ENCODE measurements at regions of chr4 and their contacts with region 1.

Region 1: GRCh38 chr4:159925770-159926169 is 822.9 kb downstream of the RAPGEF2 start:
- DNase-seq: no peak
- ATAC-seq: no peak
- H3K4me3 ChIP-seq: no peak overlapping the region
- H3K27ac ChIP-seq: no peak overlapping the region
- H3K4me1 ChIP-seq: no peaks in the 10 kb centered on the region
- H3K27me3 ChIP-seq: no peaks in the 10 kb centered on the region
- CTCF ChIP-seq: no peak

Region 2: DNA sequence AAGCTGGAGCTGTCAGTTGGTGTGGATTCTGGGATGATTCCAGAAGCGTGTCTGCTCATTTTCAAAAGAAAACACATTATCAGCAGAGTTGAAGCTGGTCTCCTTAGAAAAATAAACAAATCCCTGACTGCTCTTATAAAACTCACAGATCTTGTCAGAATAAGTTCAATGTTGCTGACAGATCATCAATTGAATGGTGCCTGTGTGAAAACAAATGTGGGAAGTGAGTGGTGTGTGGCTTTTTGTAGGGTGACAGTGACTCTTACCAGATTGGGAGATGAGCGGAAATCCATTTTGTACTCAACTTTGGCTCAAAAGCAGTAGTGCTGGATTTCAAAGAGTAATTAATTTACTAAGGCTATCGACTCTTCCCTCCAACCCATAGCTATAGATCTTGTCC is 15.0 kb before region 1 on chr4:
- intact Hi-C with region 1: loop called in 1 of 10 experiments (anchors 1 kb)
- DNase-seq: no peak
- ATAC-seq: no peak
- H3K4me3 ChIP-seq: no peak overlapping the region
- H3K27ac ChIP-seq: no peak overlapping the region
- H3K4me1 ChIP-seq: no peaks in the 10 kb centered on the region
- H3K27me3 ChIP-seq: no peaks in the 10 kb centered on the region
- CTCF ChIP-seq: no peak

Region 3: GRCh38 chr4:160580581-160580980 is 654.8 kb after region 1 on chr4:
- intact Hi-C with region 1: no loop called
- DNase-seq: no peak
- ATAC-seq: no peak
- H3K4me3 ChIP-seq: no peak overlapping the region
- H3K27ac ChIP-seq: no peak overlapping the region
- H3K4me1 ChIP-seq: no peaks in the 10 kb centered on the region
- H3K27me3 ChIP-seq: no peaks in the 10 kb centered on the region
- CTCF ChIP-seq: no peak

Measured in heart right ventricle (tissue), 16 donors.